CD8-positive, alpha-beta memory T cell (primary cell): ENCODE measurements at regions of chr19 and their contacts with region 1.

Region 1: GRCh38 chr19:29714953-29715700 is at the start of gene C19orf12:
- DNase-seq: peak; percentile 43 to 85 (median 68)
- H3K4me3 ChIP-seq: peak within 1 kb of the TSS; percentile 83
- H3K4me3 Mint-ChIP-seq: peak within 1 kb of the TSS; percentile 88 to 95 (median 93)
- H3K27ac ChIP-seq: peak within 1 kb of the TSS; percentile 95
- H3K27ac Mint-ChIP-seq: peak within 1 kb of the TSS; percentile 93 to 100 (median 96)
- H3K4me1 ChIP-seq: peaks cover 54% of the 10 kb centered on the region
- H3K4me1 Mint-ChIP-seq: peaks cover 54 to 61% (median 60%) of the 10 kb centered on the region in 3 donors
- H3K27me3 ChIP-seq: no peaks in the 10 kb centered on the region
- H3K27me3 Mint-ChIP-seq: no peaks in the 10 kb centered on the region
- total RNA-seq, gene C19orf12: 32.3 to 35.3 TPM

Region 2: DNA sequence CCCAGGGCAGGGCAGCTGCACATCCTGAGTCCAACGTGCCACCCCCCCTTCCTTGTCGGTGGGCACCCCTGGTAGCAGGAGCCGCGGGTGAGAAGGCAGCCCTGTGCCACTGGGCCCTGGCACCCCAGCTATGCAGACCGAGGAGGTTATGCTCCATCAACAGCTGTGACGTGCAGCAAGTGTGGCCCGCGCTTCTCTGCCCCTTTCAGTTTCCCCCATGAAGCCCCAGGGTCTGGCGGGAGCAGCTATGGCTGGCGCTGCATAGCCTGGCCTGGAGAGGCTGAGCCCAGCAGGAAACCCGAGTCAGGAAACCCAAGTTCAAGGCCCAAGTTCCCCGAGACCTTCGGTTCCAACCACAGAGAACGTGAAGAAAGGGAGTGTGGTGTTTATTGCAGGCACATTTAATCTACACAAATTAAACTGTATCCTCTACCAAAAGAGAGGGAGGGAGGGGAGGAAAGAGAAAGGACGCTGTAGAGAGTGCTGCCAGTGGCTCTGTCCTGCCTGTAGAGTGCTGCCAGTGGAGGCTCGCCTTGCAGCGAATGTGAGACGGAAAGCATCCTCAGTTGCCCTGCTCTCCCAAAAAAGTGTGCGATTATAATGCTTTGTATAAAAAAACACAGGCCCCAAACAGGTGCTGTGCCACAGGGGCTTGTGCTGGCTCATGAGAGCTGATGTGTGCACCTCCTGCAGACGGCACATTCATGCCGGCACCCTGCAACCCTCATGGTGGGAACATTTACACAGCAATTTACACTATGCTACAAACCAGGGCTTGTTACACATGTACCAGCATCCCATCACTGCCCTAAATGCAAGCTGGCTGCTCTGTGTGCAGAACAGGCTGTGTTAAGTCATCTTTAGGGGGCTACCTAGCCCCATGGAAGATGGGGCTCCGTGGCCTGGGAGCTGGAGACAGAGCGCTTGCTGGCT is 92.7 kb before region 1 on chr19:
- CTCF ChIA-PET with region 1: interaction called, 20 read pairs
- POLR2A ChIA-PET with region 1: interaction called, 5 read pairs
- DNase-seq: peak; percentile 30 to 64 (median 38)
- H3K4me3 ChIP-seq: peak overlapping the region; percentile 0
- H3K4me3 Mint-ChIP-seq: peak overlapping the region; percentile 33 to 84 (median 76)
- H3K27ac ChIP-seq: no peak overlapping the region
- H3K27ac Mint-ChIP-seq: peak overlapping the region; percentile 85 to 97 (median 97)
- H3K4me1 ChIP-seq: peaks cover 54% of the 10 kb centered on the region
- H3K4me1 Mint-ChIP-seq: peaks cover 54 to 63% (median 61%) of the 10 kb centered on the region in 3 donors
- H3K27me3 ChIP-seq: no peaks in the 10 kb centered on the region
- H3K27me3 Mint-ChIP-seq: no peaks in the 10 kb centered on the region

Region 3: DNA sequence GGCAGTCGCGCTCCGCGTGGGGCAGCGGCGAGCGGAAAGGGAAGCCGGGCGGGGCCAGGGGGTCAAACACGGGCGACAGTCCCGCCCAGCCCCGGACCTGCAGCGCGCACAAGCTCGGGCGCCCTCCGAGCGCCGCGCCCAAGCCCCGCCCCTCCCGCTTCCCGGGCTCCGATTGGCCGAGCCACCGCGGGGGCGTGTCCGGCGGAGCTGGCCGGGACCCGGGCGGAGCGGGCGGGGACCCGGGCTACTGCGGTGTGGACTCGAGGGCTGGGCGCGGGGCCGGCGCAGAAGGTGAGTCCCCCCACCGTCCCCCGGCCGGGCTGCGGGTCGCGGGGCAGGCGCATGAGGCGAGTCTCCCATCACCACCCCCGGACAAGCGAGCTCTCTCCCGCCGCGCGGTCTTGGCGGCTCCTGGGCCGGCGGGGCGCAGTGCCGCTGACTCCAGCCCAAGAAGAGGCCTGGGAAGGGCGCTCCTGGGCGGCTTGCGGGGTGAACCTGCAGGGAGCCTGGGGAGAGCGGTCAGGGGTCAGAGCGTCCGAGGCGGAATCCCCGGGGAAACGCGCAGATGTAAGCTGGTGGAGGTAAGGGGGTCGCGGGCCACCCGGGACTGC is 49.8 kb before region 1 on chr19 and contains the start of gene PLEKHF1:
- CTCF ChIA-PET with region 1: interaction called, 96 read pairs
- POLR2A ChIA-PET with region 1: interaction called, 21 read pairs
- DNase-seq: peak; percentile 81 to 85 (median 82)
- H3K4me3 ChIP-seq: peak within 1 kb of the TSS; percentile 91
- H3K4me3 Mint-ChIP-seq: peak within 1 kb of the TSS; percentile 88 to 98 (median 93)
- H3K27ac ChIP-seq: peak within 1 kb of the TSS; percentile 69
- H3K27ac Mint-ChIP-seq: peak within 1 kb of the TSS; percentile 89 to 100 (median 98)
- H3K4me1 ChIP-seq: peaks cover 50% of the 10 kb centered on the region
- H3K4me1 Mint-ChIP-seq: peaks cover 37 to 43% (median 42%) of the 10 kb centered on the region in 3 donors
- H3K27me3 ChIP-seq: no peaks in the 10 kb centered on the region
- H3K27me3 Mint-ChIP-seq: no peaks in the 10 kb centered on the region
- total RNA-seq, gene PLEKHF1: 21.3 to 23.0 TPM

Region 4: GRCh38 chr19:29671393-29672160 is 43.5 kb before region 1 on chr19:
- CTCF ChIA-PET with region 1: interaction called, 96 read pairs
- POLR2A ChIA-PET with region 1: interaction called, 45 read pairs
- DNase-seq: peak; percentile 73 to 96 (median 80)
- H3K4me3 ChIP-seq: peak overlapping the region; percentile 54
- H3K4me3 Mint-ChIP-seq: peak overlapping the region; percentile 61 to 95 (median 88)
- H3K27ac ChIP-seq: peak overlapping the region; percentile 77
- H3K27ac Mint-ChIP-seq: peak overlapping the region; percentile 93 to 100 (median 98)
- H3K4me1 ChIP-seq: peaks cover 99% of the 10 kb centered on the region
- H3K4me1 Mint-ChIP-seq: peaks cover 77 to 96% (median 87%) of the 10 kb centered on the region in 3 donors
- H3K27me3 ChIP-seq: no peaks in the 10 kb centered on the region
- H3K27me3 Mint-ChIP-seq: no peaks in the 10 kb centered on the region

Region 5: GRCh38 chr19:29680447-29680846 is 34.7 kb before region 1 on chr19:
- CTCF ChIA-PET with region 1: interaction called, 78 read pairs
- POLR2A ChIA-PET with region 1: interaction called, 3 read pairs
- DNase-seq: peak; percentile 79 to 90 (median 86)
- H3K4me3 ChIP-seq: peak overlapping the region; percentile 50
- H3K4me3 Mint-ChIP-seq: peak overlapping the region; percentile 26 to 83 (median 78)
- H3K27ac ChIP-seq: peak overlapping the region; percentile 25
- H3K27ac Mint-ChIP-seq: peak overlapping the region; percentile 81 to 97 (median 94)
- H3K4me1 ChIP-seq: peaks cover 73% of the 10 kb centered on the region
- H3K4me1 Mint-ChIP-seq: peaks cover 64 to 81% (median 75%) of the 10 kb centered on the region in 3 donors
- H3K27me3 ChIP-seq: no peaks in the 10 kb centered on the region
- H3K27me3 Mint-ChIP-seq: no peaks in the 10 kb centered on the region

Region 6: DNA sequence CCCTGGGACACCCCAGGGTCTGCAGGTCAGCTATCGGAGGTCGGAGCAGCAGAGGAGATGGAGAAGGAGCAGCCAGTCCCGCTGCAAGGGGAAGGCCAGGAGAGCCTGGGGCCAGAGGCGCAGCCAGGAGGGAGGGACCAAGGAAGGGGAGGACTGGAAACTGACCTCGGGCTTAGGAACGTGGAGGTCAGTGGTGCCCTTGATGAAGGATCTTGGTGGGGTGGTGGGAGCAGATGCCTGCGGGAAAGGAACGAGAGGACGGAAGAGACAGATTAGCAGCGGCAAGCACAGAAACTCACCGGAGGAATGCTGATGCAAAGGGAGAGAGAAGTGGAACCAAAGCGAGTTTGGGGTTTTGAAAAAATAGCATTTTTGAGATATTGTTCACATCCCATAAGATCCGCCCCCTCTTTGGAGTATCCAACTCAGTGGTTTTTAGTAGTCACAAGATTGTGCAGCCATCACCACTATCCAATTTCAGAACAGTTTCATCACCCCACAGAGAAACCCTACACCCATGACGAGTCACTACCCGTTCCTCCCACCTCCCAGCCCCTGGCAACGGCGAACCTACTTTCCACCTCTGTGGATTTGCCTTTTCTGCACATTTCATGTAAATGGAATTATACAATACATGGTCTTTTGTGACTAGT is 27.8 kb before region 1 on chr19:
- CTCF ChIA-PET with region 1: interaction called, 175 read pairs
- POLR2A ChIA-PET with region 1: interaction called, 12 read pairs
- DNase-seq: no peak
- H3K4me3 ChIP-seq: no peak overlapping the region
- H3K4me3 Mint-ChIP-seq: peak overlapping the region in 1 of 7 donors; percentile 65
- H3K27ac ChIP-seq: peak overlapping the region; percentile 67
- H3K27ac Mint-ChIP-seq: peak overlapping the region in 2 of 8 donors; percentile 47 to 57
- H3K4me1 ChIP-seq: peaks cover 10% of the 10 kb centered on the region
- H3K4me1 Mint-ChIP-seq: peaks cover 32 to 38% (median 37%) of the 10 kb centered on the region in 3 donors
- H3K27me3 ChIP-seq: no peaks in the 10 kb centered on the region
- H3K27me3 Mint-ChIP-seq: peaks cover 0 to 1% of the 10 kb centered on the region in 2 donors

Region 7: DNA sequence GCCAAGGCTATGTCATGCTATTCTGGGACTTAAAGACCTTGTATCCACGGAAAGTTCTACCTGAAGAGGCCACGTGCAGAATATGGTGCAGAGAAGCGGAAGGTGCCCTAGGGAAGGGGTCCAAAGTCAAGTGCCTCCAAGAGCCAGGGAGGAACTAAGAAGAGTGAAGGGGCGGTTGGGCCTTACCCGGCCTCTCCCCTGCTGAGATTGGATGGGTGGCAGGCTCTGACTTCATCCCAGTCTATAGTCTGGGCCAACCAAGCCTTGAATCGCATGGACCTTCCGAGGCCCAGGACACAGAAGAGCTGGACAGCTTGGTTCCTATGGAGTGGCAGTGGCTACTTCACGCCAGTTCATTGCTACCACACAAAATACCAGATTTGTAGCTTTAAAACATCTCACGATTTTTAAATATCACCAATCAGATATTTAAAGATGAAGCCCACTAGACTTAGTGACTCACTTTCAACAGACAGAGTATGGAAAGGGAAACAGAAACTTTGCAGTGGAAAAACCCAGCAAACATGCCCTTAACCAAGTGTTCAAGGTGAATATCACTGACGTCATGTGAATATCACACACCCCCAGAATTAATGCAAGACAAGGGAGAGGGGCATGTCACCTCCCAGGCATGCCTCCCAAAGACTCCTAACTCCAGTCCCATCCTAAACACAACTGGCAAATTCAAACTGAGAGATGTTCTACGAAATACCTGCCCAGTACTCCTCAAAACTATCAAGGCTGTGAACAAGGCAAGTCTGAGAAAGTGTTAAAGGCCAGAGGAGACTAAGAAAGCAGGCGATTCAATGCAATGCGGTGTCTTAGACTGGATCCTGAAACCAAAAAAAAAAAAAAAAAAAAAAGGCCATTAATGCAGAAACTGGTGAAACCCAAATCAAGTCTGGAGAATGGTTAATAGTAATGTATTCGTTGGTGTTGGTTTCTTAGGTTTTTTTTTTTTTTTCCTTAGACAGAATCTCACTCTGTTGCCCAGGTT is 10.3 kb before region 1 on chr19:
- CTCF ChIA-PET with region 1: interaction called, 24 read pairs
- POLR2A ChIA-PET with region 1: interaction called, 3 read pairs
- DNase-seq: no peak
- H3K4me3 ChIP-seq: no peak overlapping the region
- H3K4me3 Mint-ChIP-seq: peak overlapping the region in 1 of 7 donors; percentile 40
- H3K27ac ChIP-seq: no peak overlapping the region
- H3K27ac Mint-ChIP-seq: peak overlapping the region; percentile 2 to 90 (median 70)
- H3K4me1 ChIP-seq: peaks cover 10% of the 10 kb centered on the region
- H3K4me1 Mint-ChIP-seq: peaks cover 18 to 43% (median 29%) of the 10 kb centered on the region in 3 donors
- H3K27me3 ChIP-seq: no peaks in the 10 kb centered on the region
- H3K27me3 Mint-ChIP-seq: no peaks in the 10 kb centered on the region